Activated naive CD4-positive, alpha-beta T cell treated with anti-CD3 and anti-CD28 coated beads for 36 hours (primary cell): ENCODE measurements at regions of chr12 and their contacts with region 1.

Region 1: DNA sequence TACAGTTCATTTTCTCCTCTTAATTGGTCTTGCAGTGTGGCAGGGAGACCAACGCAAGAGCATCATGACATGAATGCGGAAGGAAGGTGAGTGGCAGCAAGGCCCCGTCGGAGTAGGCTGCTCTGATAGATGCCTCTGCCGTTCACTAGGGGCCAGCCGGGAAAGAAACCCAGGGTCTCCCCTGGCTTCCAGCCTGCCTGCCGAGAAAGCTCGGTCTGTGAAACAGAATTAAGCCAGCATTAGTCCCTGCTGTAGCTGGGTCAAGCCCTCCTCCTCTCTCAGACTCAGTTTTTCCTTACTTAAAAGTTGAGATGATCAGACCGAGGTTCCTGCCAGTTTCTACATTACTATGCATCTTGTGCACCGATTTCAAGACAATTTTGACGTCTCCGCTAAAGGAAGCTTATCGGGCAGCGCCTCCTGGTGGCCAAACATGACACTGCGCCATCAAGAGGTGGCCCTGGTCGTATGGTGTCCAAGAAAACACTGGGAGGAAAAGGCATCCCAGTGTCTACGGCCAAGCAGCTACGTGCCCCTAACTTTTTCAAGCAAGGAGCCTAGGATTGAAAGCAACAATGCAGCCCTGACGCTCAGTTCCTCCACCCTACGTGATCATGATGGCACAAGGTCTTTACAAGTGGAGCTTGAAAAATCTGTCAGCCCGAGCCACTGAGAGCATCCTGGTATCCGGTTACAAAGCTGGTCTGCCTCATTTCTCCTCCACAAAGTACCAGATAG is 131.6 kb downstream of the KSR2 start:
- DNase-seq: peak; percentile 89
- H3K4me3 Mint-ChIP-seq: no peak overlapping the region
- H3K27ac Mint-ChIP-seq: no peak overlapping the region
- H3K4me1 Mint-ChIP-seq: peaks cover 4% of the 10 kb centered on the region
- H3K27me3 Mint-ChIP-seq: peaks cover 11% of the 10 kb centered on the region

Region 2: DNA sequence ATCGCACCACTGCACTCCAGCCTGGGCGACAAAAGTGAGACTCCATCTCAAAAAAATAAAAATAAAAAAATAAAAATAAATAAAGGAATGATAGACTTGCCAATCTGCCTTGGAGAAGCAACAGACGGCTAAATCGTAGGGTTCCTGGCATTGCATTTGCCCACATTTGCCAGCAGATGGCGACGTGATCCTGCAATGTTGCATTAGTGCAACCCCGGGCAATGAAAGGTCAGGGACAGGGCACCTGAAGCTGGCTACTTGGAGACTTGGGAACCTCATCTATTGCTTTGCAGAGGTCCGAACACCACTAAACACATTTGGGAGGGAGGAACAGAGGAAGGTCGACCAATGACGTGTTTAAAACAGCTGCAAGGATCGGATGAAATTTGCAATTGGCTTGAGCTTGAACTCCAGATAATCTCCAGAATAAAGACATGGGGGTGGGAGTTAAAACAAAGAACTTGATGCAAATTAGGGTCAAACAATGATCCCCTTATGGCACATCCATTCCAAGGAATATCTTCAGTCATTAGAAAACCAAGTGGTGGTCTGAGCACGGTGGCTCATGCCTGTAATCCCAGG is 1133.9 kb before region 1 on chr12:
- CTCF ChIA-PET with region 1: no interaction called
- intact Hi-C with region 1: loop called (anchors 5 kb)
- DNase-seq: peak; percentile 78
- H3K4me3 Mint-ChIP-seq: no peak overlapping the region
- H3K27ac Mint-ChIP-seq: no peak overlapping the region
- H3K4me1 Mint-ChIP-seq: peaks cover 2% of the 10 kb centered on the region
- H3K27me3 Mint-ChIP-seq: peaks cover 2% of the 10 kb centered on the region

Region 3: GRCh38 chr12:117236456-117237001 is 600.6 kb before region 1 on chr12:
- CTCF ChIA-PET with region 1: interaction called, 17 read pairs
- intact Hi-C with region 1: loop called (anchors 1 kb)
- DNase-seq: peak; percentile 92
- H3K4me3 Mint-ChIP-seq: no peak overlapping the region
- H3K27ac Mint-ChIP-seq: no peak overlapping the region
- H3K4me1 Mint-ChIP-seq: no peaks in the 10 kb centered on the region
- H3K27me3 Mint-ChIP-seq: peaks cover 15% of the 10 kb centered on the region

Region 4: DNA sequence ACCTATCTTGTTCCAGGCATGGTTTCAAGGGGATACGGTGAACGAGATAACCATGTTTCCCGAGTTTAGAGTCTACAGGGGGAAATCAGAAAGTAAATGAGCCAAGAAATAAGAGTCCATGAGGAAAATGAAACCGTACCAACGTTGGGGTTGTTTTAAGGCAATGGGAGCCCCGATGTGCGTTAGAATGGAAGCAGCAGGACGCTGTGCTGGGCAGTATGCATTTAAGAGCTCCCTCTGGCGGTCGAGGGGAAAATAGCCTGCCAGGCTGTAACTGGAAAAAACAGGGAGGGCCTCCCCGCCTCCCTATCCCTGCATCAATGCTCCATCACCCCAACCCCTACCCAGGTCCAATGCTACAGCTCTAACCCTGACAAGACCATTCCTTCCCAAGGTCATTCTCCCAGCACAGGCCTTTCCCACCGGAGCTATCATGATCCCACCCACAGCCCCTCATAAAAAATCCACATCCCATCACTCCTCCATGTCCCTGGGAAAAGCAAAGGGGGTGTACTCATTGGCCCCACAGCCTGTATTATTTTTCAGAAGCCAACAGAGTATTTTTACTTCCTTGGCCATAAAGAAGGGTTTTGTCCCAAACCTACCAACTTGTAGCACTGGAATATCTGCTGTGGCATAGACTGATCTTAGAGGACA is 249.4 kb before region 1 on chr12:
- CTCF ChIA-PET with region 1: interaction called, 13 read pairs
- intact Hi-C with region 1: loop called (anchors 5 kb)
- DNase-seq: peak; percentile 61
- H3K4me3 Mint-ChIP-seq: no peak overlapping the region
- H3K27ac Mint-ChIP-seq: no peak overlapping the region
- H3K4me1 Mint-ChIP-seq: no peaks in the 10 kb centered on the region
- H3K27me3 Mint-ChIP-seq: peaks cover 16% of the 10 kb centered on the region

Region 5: GRCh38 chr12:117857632-117858612 is 20.8 kb after region 1 on chr12:
- CTCF ChIA-PET with region 1: interaction called, 13 read pairs
- intact Hi-C with region 1: no loop called
- DNase-seq: peak; percentile 76
- H3K4me3 Mint-ChIP-seq: no peak overlapping the region
- H3K27ac Mint-ChIP-seq: no peak overlapping the region
- H3K4me1 Mint-ChIP-seq: no peaks in the 10 kb centered on the region
- H3K27me3 Mint-ChIP-seq: peaks cover 2% of the 10 kb centered on the region

Region 6: DNA sequence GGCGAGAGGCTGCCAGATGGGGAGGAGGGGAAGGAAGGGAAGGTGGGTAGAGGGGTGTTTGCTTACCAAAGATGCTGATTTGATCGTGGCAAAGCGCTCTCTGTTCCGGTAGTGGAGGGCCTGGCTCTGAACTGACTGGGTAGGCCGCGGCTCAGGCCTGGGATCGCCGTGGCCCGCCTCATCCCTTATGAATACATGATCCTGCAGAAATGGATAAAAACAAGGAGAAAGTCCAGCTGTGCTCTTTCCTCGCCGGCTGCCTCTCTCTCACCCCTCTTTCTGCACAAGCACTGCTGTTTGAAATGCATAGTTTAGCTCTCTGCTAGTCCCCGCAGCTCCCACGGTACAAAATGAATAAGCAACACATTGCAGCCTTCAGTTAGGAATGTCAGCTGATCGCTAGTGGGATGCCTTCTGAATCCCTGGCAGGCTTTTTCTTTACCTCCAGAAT is 352.6 kb after region 1 on chr12:
- CTCF ChIA-PET with region 1: no interaction called
- intact Hi-C with region 1: no loop called
- DNase-seq: no peak
- H3K4me3 Mint-ChIP-seq: no peak overlapping the region
- H3K27ac Mint-ChIP-seq: no peak overlapping the region
- H3K4me1 Mint-ChIP-seq: peaks cover 10% of the 10 kb centered on the region
- H3K27me3 Mint-ChIP-seq: no peaks in the 10 kb centered on the region